CD4-positive, alpha-beta memory T cell (primary cell): ENCODE measurements at regions of chr5 and their contacts with region 1.

Region 1: GRCh38 chr5:81851481-81852178 is 100.7 kb upstream of the SSBP2 start:
- DNase-seq: peak; percentile 88 to 92 (median 90)
- H3K4me3 ChIP-seq: peak overlapping the region in 1 of 2 donors; percentile 56
- H3K4me3 Mint-ChIP-seq: peak overlapping the region; percentile 94 to 99 (median 96)
- H3K27ac ChIP-seq: peak overlapping the region; percentile 64
- H3K27ac Mint-ChIP-seq: peak overlapping the region; percentile 94 to 99 (median 97)
- H3K4me1 ChIP-seq: peaks cover 31% of the 10 kb centered on the region
- H3K4me1 Mint-ChIP-seq: peaks cover 31 to 56% (median 42%) of the 10 kb centered on the region in 4 donors
- H3K27me3 ChIP-seq: no peaks in the 10 kb centered on the region
- H3K27me3 Mint-ChIP-seq: no peaks in the 10 kb centered on the region

Region 2: GRCh38 chr5:81425569-81425968 is 426.1 kb before region 1 on chr5:
- CTCF ChIA-PET with region 1: interaction called, 9 read pairs
- POLR2A ChIA-PET with region 1: interaction called, 3 read pairs
- intact Hi-C with region 1: loop called (anchors 5 kb)
- DNase-seq: peak in 4 of 5 donors; percentile 49 to 59 (median 56)
- H3K4me3 ChIP-seq: no peak overlapping the region
- H3K4me3 Mint-ChIP-seq: peak overlapping the region in 1 of 8 donors; percentile 58
- H3K27ac ChIP-seq: no peak overlapping the region
- H3K27ac Mint-ChIP-seq: peak overlapping the region in 4 of 7 donors; percentile 5 to 73 (median 7)
- H3K4me1 ChIP-seq: no peaks in the 10 kb centered on the region
- H3K4me1 Mint-ChIP-seq: peaks cover 3 to 7% (median 5%) of the 10 kb centered on the region in 4 donors
- H3K27me3 ChIP-seq: no peaks in the 10 kb centered on the region
- H3K27me3 Mint-ChIP-seq: no peaks in the 10 kb centered on the region

Region 3: DNA sequence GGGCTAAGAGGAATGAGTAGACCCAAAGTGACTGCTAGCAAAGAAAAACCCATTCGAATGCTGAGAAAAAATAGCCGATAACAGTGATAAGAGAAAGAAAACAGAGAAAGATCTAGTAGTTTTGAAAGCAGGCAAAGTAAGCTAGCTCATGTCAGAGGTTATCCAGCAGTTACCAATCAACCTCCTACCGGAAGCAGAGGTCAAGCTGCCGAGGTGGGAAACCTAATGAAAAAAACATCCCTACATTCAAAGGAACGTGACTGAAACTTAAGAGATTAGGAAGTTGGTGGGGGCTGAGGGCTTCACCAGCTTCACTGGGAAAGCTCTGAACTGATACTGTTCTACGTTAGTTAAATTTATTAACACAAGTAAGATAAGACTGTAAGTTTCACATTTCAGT is 133.3 kb before region 1 on chr5:
- CTCF ChIA-PET with region 1: no interaction called
- POLR2A ChIA-PET with region 1: no interaction called
- intact Hi-C with region 1: no loop called
- DNase-seq: no peak
- H3K4me3 ChIP-seq: no peak overlapping the region
- H3K4me3 Mint-ChIP-seq: peak overlapping the region in 6 of 8 donors; percentile 2 to 51 (median 46)
- H3K27ac ChIP-seq: no peak overlapping the region
- H3K27ac Mint-ChIP-seq: peak overlapping the region in 1 of 7 donors; percentile 71
- H3K4me1 ChIP-seq: peaks cover 43% of the 10 kb centered on the region
- H3K4me1 Mint-ChIP-seq: peaks cover 40 to 82% (median 61%) of the 10 kb centered on the region in 4 donors
- H3K27me3 ChIP-seq: no peaks in the 10 kb centered on the region
- H3K27me3 Mint-ChIP-seq: no peaks in the 10 kb centered on the region

Region 4: GRCh38 chr5:81759632-81760005 is 92.0 kb before region 1 on chr5:
- CTCF ChIA-PET with region 1: interaction called, 15 read pairs
- POLR2A ChIA-PET with region 1: interaction called, 11 read pairs
- intact Hi-C with region 1: no loop called
- DNase-seq: no peak
- H3K4me3 ChIP-seq: no peak overlapping the region
- H3K4me3 Mint-ChIP-seq: no peak overlapping the region
- H3K27ac ChIP-seq: no peak overlapping the region
- H3K27ac Mint-ChIP-seq: peak overlapping the region in 1 of 7 donors; percentile 40
- H3K4me1 ChIP-seq: peaks cover 7% of the 10 kb centered on the region
- H3K4me1 Mint-ChIP-seq: peaks cover 9 to 23% (median 17%) of the 10 kb centered on the region in 4 donors
- H3K27me3 ChIP-seq: no peaks in the 10 kb centered on the region
- H3K27me3 Mint-ChIP-seq: peaks cover 0 to 2% of the 10 kb centered on the region in 2 donors

Region 5: DNA sequence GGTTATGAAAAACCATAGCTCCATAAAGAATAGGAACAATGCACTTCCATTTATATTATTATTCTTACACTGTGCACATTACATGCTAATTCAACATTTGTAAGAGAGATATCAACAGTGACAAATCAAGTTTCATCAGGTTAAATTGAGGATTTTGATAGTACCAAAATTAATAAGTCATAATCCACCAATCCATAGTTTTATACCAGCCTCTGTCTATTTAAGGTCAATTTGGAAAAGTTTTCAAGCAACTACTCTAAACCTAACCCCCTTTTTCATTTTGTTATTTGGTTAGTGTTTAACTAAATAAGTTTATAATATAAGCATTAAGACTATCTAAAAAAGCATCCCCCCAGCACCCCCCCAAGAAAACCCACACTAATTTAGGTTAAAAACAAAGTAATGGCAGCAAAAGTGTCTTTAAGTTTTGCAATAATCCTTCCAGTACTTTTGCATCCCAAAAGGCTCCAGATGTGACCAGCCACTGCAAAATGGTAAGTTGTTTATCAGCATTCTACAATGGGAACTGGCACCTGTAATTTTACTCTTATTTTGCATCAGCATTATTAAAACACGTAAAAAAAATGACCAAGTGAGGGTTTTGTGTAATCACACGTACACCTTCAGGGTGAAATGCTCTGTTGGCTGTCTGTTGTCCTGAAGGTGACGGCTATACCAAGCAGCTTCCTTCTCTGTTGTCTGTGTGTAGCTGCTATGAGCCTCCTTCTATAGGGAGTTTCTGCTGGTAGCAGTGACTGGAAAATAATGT is 64.0 kb before region 1 on chr5:
- CTCF ChIA-PET with region 1: interaction called, 3 read pairs
- POLR2A ChIA-PET with region 1: interaction called, 9 read pairs
- intact Hi-C with region 1: loop called (anchors 1 kb)
- DNase-seq: peak in 2 of 5 donors; percentile 8 to 10
- H3K4me3 ChIP-seq: no peak overlapping the region
- H3K4me3 Mint-ChIP-seq: peak overlapping the region in 1 of 8 donors; percentile 14
- H3K27ac ChIP-seq: no peak overlapping the region
- H3K27ac Mint-ChIP-seq: no peak overlapping the region
- H3K4me1 ChIP-seq: peaks cover 7% of the 10 kb centered on the region
- H3K4me1 Mint-ChIP-seq: peaks cover 3 to 11% (median 10%) of the 10 kb centered on the region in 4 donors
- H3K27me3 ChIP-seq: no peaks in the 10 kb centered on the region
- H3K27me3 Mint-ChIP-seq: no peaks in the 10 kb centered on the region

Region 6: GRCh38 chr5:81838307-81838906 is 13.2 kb before region 1 on chr5:
- CTCF ChIA-PET with region 1: interaction called, 41 read pairs
- POLR2A ChIA-PET with region 1: interaction called, 44 read pairs
- intact Hi-C with region 1: loop called (anchors 1 kb)
- DNase-seq: peak in 4 of 5 donors; percentile 33 to 45 (median 36)
- H3K4me3 ChIP-seq: no peak overlapping the region
- H3K4me3 Mint-ChIP-seq: peak overlapping the region in 1 of 8 donors; percentile 27
- H3K27ac ChIP-seq: no peak overlapping the region
- H3K27ac Mint-ChIP-seq: peak overlapping the region in 2 of 7 donors; percentile 58 to 67
- H3K4me1 ChIP-seq: no peaks in the 10 kb centered on the region
- H3K4me1 Mint-ChIP-seq: peaks cover 7 to 14% (median 9%) of the 10 kb centered on the region in 4 donors
- H3K27me3 ChIP-seq: no peaks in the 10 kb centered on the region
- H3K27me3 Mint-ChIP-seq: no peaks in the 10 kb centered on the region

Region 7: GRCh38 chr5:82068723-82069122 is 217.1 kb after region 1 on chr5:
- CTCF ChIA-PET with region 1: no interaction called
- POLR2A ChIA-PET with region 1: no interaction called
- intact Hi-C with region 1: loop called (anchors 10 kb)
- DNase-seq: peak in 4 of 5 donors; percentile 9 to 38 (median 18)
- H3K4me3 ChIP-seq: no peak overlapping the region
- H3K4me3 Mint-ChIP-seq: peak overlapping the region; percentile 45 to 81 (median 70)
- H3K27ac ChIP-seq: no peak overlapping the region
- H3K27ac Mint-ChIP-seq: peak overlapping the region in 4 of 7 donors; percentile 20 to 85 (median 60)
- H3K4me1 ChIP-seq: no peaks in the 10 kb centered on the region
- H3K4me1 Mint-ChIP-seq: peaks cover 1 to 4% (median 4%) of the 10 kb centered on the region in 4 donors
- H3K27me3 ChIP-seq: no peaks in the 10 kb centered on the region
- H3K27me3 Mint-ChIP-seq: no peaks in the 10 kb centered on the region

Region 8: DNA sequence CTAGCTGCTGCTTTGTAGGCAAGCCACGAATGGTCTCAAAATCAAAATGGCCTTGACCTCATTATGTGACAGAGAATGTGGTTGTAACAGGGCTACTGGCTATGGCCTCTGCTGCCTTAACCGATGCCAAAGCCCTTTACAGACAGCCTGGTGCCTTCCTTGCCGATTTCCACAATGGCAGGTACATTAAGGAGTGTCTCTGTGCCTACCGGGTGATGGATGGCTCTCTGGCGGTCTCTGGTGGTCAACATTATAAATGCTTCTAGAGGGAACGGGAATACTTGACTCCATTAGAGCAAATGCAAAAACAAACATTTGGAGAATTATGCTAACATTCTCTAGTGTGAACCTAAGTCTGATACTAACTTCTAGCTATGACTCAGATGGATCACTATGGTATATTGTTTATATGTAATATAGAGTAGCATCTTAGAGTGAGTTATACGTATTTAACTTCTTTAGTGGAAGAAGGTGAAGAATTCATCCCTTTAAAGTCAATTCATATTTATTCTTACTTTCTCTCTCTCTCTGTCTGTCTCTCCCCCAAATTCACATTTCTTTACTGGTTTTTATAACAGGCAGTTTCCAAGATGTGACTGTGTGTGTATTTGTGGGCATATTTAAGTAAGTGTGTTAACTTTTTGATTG is 374.0 kb after region 1 on chr5:
- CTCF ChIA-PET with region 1: interaction called, 10 read pairs
- POLR2A ChIA-PET with region 1: no interaction called
- intact Hi-C with region 1: loop called (anchors 5 kb)
- DNase-seq: peak; percentile 58 to 65 (median 63)
- H3K4me3 ChIP-seq: no peak overlapping the region
- H3K4me3 Mint-ChIP-seq: peak overlapping the region in 1 of 8 donors; percentile 51
- H3K27ac ChIP-seq: no peak overlapping the region
- H3K27ac Mint-ChIP-seq: peak overlapping the region in 2 of 7 donors; percentile 4 to 43
- H3K4me1 ChIP-seq: no peaks in the 10 kb centered on the region
- H3K4me1 Mint-ChIP-seq: peaks cover 3 to 14% (median 5%) of the 10 kb centered on the region in 4 donors
- H3K27me3 ChIP-seq: no peaks in the 10 kb centered on the region
- H3K27me3 Mint-ChIP-seq: no peaks in the 10 kb centered on the region